ENCODE measurements at regions of chr3 and their contacts with region 1.

Region 1: DNA sequence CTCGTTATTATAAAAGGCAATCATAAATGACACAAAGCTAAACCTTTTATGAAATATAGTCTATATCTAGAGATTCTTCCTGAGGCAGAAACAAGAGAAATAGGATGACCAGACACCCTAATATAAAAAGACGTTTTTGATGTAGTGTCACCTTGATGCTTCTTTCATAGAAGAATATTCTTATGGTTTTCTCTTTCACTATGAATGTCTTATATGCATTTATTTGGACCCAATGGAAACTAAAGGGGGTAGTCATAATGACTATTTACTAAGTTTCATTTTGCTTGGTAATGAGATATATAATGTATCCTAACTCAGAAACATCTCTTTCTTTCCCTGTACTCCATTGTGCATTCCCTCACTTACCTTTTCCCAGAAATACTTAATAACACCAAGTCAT is 393.9 kb downstream of the RAP2B start:
- DNase-seq: no peak
- ATAC-seq: no peak
- H3K4me3 Mint-ChIP-seq: no peak overlapping the region
- H3K27ac Mint-ChIP-seq: no peak overlapping the region
- H3K4me1 Mint-ChIP-seq: no peaks in the 10 kb centered on the region
- H3K27me3 Mint-ChIP-seq: no peaks in the 10 kb centered on the region
- CTCF ChIP-seq: no peak

Region 2: GRCh38 chr3:153595186-153595815 is 39.4 kb after region 1 on chr3:
- CTCF ChIA-PET with region 1: no interaction called
- POLR2A ChIA-PET with region 1: no interaction called
- intact Hi-C with region 1: loop called (anchors 1 kb)
- DNase-seq: no peak
- ATAC-seq: no peak
- H3K4me3 Mint-ChIP-seq: no peak overlapping the region
- H3K27ac Mint-ChIP-seq: no peak overlapping the region
- H3K4me1 Mint-ChIP-seq: no peaks in the 10 kb centered on the region
- H3K27me3 Mint-ChIP-seq: no peaks in the 10 kb centered on the region
- CTCF ChIP-seq: no peak